K562 (cell line): ENCODE measurements at regions of chr6 and their contacts with region 1.

Region 1: GRCh38 chr6:160088069-160088783 is 33.4 kb upstream of the SLC22A1 start:
- DNase-seq: peak; percentile 43 to 52 (median 46)
- ATAC-seq: peak; percentile 70
- H3K4me3 ChIP-seq: no peak overlapping the region
- H3K27ac ChIP-seq: no peak overlapping the region
- H3K4me1 ChIP-seq: no peaks in the 10 kb centered on the region
- H3K27me3 ChIP-seq: no peaks in the 10 kb centered on the region
- CTCF ChIP-seq: peak; percentile 54 to 75 (median 71)
- EP300 ChIP-seq: no peak
- POLR2A ChIP-seq: no peak
- RAD21 ChIP-seq: peak; percentile 37 to 66

Region 2: DNA sequence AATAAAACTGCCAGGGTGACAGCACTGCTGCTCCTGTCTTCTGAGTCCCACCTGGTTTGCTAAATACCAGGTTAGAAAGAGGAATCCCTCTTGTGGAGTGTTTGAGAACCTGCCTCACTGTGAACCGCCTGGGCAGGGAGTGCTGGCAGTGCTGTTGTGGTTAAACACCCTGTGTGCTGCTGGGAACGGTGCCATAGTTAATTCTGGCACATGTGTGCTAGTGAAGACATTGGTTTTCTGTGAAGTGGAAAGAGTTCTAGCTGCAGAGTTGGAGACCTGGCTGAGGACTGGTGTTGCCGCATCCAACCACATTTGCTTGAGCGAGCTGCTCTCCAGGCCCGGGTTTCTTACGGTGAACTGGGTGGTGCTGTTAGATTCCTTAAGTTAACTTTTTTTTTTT is 46.6 kb before region 1 on chr6:
- CTCF ChIA-PET with region 1: no interaction called
- POLR2A ChIA-PET with region 1: no interaction called
- in situ Hi-C with region 1: no loop called
- intact Hi-C with region 1: no loop called
- DNase-seq: no peak
- ATAC-seq: peak; percentile 56
- H3K4me3 ChIP-seq: no peak overlapping the region
- H3K27ac ChIP-seq: 0 out of 3 replicates have a peak overlapping the region, but pooled peaks have one; percentile 13
- H3K4me1 ChIP-seq: peaks cover 5 to 9% of the 10 kb centered on the region in 2 experiments; a peak in 3 of 5 replicates
- H3K27me3 ChIP-seq: no peaks in the 10 kb centered on the region
- CTCF ChIP-seq: no peak
- EP300 ChIP-seq: no peak
- POLR2A ChIP-seq: no peak
- RAD21 ChIP-seq: no peak

Region 3: GRCh38 chr6:160102956-160103824 is 15.0 kb after region 1 on chr6:
- CTCF ChIA-PET with region 1: no interaction called
- POLR2A ChIA-PET with region 1: interaction called, 8 read pairs
- in situ Hi-C with region 1: no loop called
- intact Hi-C with region 1: loop called (anchors 1 kb)
- DNase-seq: peak; percentile 39 to 59 (median 47)
- ATAC-seq: peak; percentile 30
- H3K4me3 ChIP-seq: no peak overlapping the region
- H3K27ac ChIP-seq: no peak overlapping the region
- H3K4me1 ChIP-seq: peaks cover 32% of the 10 kb centered on the region in 2 experiments
- H3K27me3 ChIP-seq: no peaks in the 10 kb centered on the region; a peak in 1 of 5 replicates
- CTCF ChIP-seq: peak; percentile 54 to 75 (median 62)
- EP300 ChIP-seq: no peak
- POLR2A ChIP-seq: no peak
- RAD21 ChIP-seq: peak in 1 of 2 experiments; percentile 63; a peak in 3 of 4 replicates